ENCODE measurements at regions of chr12 and their contacts with region 1.

Region 1: GRCh38 chr12:4276524-4277204 is 3.1 kb downstream of the CCND2 start:
- DNase-seq: peak; percentile 83
- ATAC-seq: peak; percentile 43

Region 2: GRCh38 chr12:3527181-3527580 is 749.5 kb before region 1 on chr12:
- intact Hi-C with region 1: no loop called
- DNase-seq: no peak
- ATAC-seq: no peak

Region 3: GRCh38 chr12:3683670-3684069 is 593.0 kb before region 1 on chr12:
- intact Hi-C with region 1: no loop called
- DNase-seq: no peak
- ATAC-seq: peak; percentile 34

Region 4: GRCh38 chr12:3885277-3886094 is 391.2 kb before region 1 on chr12:
- intact Hi-C with region 1: loop called (anchors 10 kb)
- DNase-seq: no peak
- ATAC-seq: peak; percentile 63

Region 5: GRCh38 chr12:4201333-4202100 is 75.1 kb before region 1 on chr12:
- intact Hi-C with region 1: no loop called
- DNase-seq: no peak
- ATAC-seq: no peak

Region 6: DNA sequence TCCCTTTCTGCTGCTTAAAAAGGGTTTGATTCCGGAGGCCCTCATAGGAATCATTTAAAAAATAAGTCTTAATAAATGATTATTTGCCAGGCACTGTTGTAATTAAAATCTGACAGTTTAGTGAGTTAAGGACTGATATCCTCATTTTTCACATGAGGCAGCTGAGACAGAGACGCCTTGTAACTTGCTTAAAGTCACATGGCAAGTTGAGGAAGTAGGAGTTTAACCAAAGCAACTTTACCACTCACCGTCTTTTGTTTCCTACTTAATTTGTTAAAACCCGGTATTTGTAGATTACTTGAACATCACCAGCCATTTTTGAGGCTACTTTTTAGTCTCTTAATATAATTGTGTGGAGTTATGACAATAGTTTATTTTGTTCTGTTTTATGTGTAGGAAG is 46.7 kb after region 1 on chr12:
- intact Hi-C with region 1: no loop called
- DNase-seq: no peak
- ATAC-seq: no peak